CD4-positive, alpha-beta memory T cell (primary cell): ENCODE measurements at regions of chr2 and their contacts with region 1.

Region 1: GRCh38 chr2:112626604-112627059 is 19.1 kb upstream of the SLC20A1 start:
- DNase-seq: peak; percentile 57 to 75 (median 63)
- H3K4me3 ChIP-seq: peak overlapping the region in 1 of 2 donors; percentile 46
- H3K4me3 Mint-ChIP-seq: peak overlapping the region; percentile 69 to 83 (median 78)
- H3K27ac ChIP-seq: peak overlapping the region; percentile 15
- H3K27ac Mint-ChIP-seq: peak overlapping the region; percentile 57 to 95 (median 85)
- H3K4me1 ChIP-seq: peaks cover 75% of the 10 kb centered on the region
- H3K4me1 Mint-ChIP-seq: peaks cover 36 to 80% (median 60%) of the 10 kb centered on the region in 4 donors
- H3K27me3 ChIP-seq: no peaks in the 10 kb centered on the region
- H3K27me3 Mint-ChIP-seq: peaks cover 0 to 3% of the 10 kb centered on the region in 2 donors

Region 2: GRCh38 chr2:112601751-112602150 is 24.9 kb before region 1 on chr2:
- CTCF ChIA-PET with region 1: interaction called, 146 read pairs
- POLR2A ChIA-PET with region 1: interaction called, 6 read pairs
- intact Hi-C with region 1: loop called (anchors 1 kb)
- DNase-seq: no peak
- H3K4me3 ChIP-seq: no peak overlapping the region
- H3K4me3 Mint-ChIP-seq: no peak overlapping the region
- H3K27ac ChIP-seq: no peak overlapping the region
- H3K27ac Mint-ChIP-seq: peak overlapping the region in 1 of 7 donors; percentile 77
- H3K4me1 ChIP-seq: peaks cover 6% of the 10 kb centered on the region
- H3K4me1 Mint-ChIP-seq: peaks cover 4 to 5% (median 4%) of the 10 kb centered on the region in 4 donors
- H3K27me3 ChIP-seq: no peaks in the 10 kb centered on the region
- H3K27me3 Mint-ChIP-seq: no peaks in the 10 kb centered on the region

Region 3: GRCh38 chr2:112658820-112659667 is 32.4 kb after region 1 on chr2:
- CTCF ChIA-PET with region 1: interaction called, 10 read pairs
- POLR2A ChIA-PET with region 1: interaction called, 5 read pairs
- intact Hi-C with region 1: no loop called
- DNase-seq: no peak
- H3K4me3 ChIP-seq: no peak overlapping the region
- H3K4me3 Mint-ChIP-seq: peak overlapping the region in 1 of 8 donors; percentile 52
- H3K27ac ChIP-seq: no peak overlapping the region
- H3K27ac Mint-ChIP-seq: peak overlapping the region; percentile 61 to 84 (median 72)
- H3K4me1 ChIP-seq: peaks cover 32% of the 10 kb centered on the region
- H3K4me1 Mint-ChIP-seq: peaks cover 28 to 66% (median 37%) of the 10 kb centered on the region in 4 donors
- H3K27me3 ChIP-seq: no peaks in the 10 kb centered on the region
- H3K27me3 Mint-ChIP-seq: no peaks in the 10 kb centered on the region

Region 4: GRCh38 chr2:112683538-112684414 is 57.1 kb after region 1 on chr2:
- CTCF ChIA-PET with region 1: interaction called, 319 read pairs
- POLR2A ChIA-PET with region 1: interaction called, 102 read pairs
- intact Hi-C with region 1: no loop called
- DNase-seq: no peak
- H3K4me3 ChIP-seq: no peak overlapping the region
- H3K4me3 Mint-ChIP-seq: peak overlapping the region in 4 of 8 donors; percentile 0 to 52 (median 16)
- H3K27ac ChIP-seq: no peak overlapping the region
- H3K27ac Mint-ChIP-seq: peak overlapping the region in 4 of 7 donors; percentile 7 to 67 (median 36)
- H3K4me1 ChIP-seq: peaks cover 13% of the 10 kb centered on the region
- H3K4me1 Mint-ChIP-seq: peaks cover 6 to 20% (median 13%) of the 10 kb centered on the region in 4 donors
- H3K27me3 ChIP-seq: no peaks in the 10 kb centered on the region
- H3K27me3 Mint-ChIP-seq: no peaks in the 10 kb centered on the region